Prostate gland (tissue), 2 donors: ENCODE measurements at regions of chr14 and their contacts with region 1.

Region 1: DNA sequence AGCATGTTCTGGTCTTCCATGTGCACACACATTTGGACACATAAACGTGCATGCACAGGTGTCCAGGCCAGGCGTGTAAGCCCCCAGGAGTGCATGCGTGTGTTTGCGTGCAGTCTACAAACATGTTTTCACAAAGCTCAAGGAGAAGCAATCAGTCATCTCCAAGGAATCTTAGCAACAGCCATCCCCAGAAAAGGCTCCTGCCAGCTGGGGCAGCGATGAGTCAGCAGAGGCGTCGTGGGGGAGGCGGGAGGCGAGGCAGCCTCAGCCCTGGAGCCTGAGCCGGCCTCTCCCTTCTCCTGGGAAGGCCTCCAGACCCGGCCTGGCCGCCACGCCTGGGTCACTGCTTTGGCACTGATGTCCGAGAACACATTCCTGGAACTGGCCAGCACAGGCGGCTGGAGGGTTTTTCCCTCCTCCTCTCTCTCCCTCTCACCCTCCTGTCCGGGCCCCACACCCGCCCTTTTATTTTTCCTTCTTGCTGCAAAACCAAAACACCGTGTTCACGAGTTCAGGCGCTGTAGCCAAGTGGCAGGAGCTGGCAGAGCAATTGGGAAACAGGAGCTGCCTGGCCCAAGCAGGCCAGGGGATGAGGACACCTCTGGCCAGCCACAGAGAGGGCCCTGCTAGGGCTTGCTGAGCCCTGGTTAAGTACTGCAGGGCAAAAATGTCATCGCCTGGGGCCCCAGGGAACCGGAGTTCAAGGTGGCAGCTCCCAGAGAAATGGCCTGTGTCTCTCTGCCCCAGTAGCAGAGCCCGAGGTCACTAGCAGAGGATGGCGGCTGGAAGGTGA is 92.7 kb downstream of the LRRC74A start:
- DNase-seq: peak; percentile 92
- H3K4me3 ChIP-seq: no peak overlapping the region
- H3K27ac ChIP-seq: peak overlapping the region; percentile 86 to 89
- H3K4me1 ChIP-seq: peaks cover 43% of the 10 kb centered on the region
- H3K27me3 ChIP-seq: no peaks in the 10 kb centered on the region
- CTCF ChIP-seq: peak in 1 of 4 experiments; percentile 27
- POLR2A ChIP-seq: no peak

Region 2: GRCh38 chr14:76953196-76954000 is 34.5 kb after region 1 on chr14:
- intact Hi-C with region 1: loop called (anchors 2 kb)
- DNase-seq: peak; percentile 81
- H3K4me3 ChIP-seq: no peak overlapping the region
- H3K27ac ChIP-seq: peak overlapping the region; percentile 90 to 96
- H3K4me1 ChIP-seq: peaks cover 33% of the 10 kb centered on the region
- H3K27me3 ChIP-seq: no peaks in the 10 kb centered on the region
- CTCF ChIP-seq: peak in 1 of 4 experiments; percentile 5
- POLR2A ChIP-seq: no peak

Region 3: DNA sequence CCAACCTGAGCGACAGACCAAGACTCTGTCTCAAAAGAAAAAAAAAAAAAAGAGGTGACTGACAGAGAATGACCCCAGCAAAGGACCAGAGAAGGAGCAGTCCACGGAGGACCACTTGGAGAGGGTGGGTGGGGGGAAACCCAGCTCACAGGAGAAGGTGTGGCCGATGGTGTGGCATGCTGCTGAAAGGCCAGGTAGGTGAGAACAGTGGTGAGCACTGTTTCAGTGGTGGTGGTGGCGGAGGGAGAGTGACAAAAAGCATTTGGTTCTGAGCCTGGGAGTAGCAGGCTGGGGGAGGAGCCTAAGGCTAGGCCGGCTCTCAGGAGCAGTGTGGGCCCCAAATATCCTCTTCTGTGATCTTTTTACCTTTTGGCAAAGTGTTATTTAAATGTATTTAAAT is 45.7 kb after region 1 on chr14:
- intact Hi-C with region 1: no loop called
- DNase-seq: no peak
- H3K4me3 ChIP-seq: no peak overlapping the region
- H3K27ac ChIP-seq: no peak overlapping the region
- H3K4me1 ChIP-seq: no peaks in the 10 kb centered on the region
- H3K27me3 ChIP-seq: no peaks in the 10 kb centered on the region
- CTCF ChIP-seq: no peak
- POLR2A ChIP-seq: no peak

Region 4: DNA sequence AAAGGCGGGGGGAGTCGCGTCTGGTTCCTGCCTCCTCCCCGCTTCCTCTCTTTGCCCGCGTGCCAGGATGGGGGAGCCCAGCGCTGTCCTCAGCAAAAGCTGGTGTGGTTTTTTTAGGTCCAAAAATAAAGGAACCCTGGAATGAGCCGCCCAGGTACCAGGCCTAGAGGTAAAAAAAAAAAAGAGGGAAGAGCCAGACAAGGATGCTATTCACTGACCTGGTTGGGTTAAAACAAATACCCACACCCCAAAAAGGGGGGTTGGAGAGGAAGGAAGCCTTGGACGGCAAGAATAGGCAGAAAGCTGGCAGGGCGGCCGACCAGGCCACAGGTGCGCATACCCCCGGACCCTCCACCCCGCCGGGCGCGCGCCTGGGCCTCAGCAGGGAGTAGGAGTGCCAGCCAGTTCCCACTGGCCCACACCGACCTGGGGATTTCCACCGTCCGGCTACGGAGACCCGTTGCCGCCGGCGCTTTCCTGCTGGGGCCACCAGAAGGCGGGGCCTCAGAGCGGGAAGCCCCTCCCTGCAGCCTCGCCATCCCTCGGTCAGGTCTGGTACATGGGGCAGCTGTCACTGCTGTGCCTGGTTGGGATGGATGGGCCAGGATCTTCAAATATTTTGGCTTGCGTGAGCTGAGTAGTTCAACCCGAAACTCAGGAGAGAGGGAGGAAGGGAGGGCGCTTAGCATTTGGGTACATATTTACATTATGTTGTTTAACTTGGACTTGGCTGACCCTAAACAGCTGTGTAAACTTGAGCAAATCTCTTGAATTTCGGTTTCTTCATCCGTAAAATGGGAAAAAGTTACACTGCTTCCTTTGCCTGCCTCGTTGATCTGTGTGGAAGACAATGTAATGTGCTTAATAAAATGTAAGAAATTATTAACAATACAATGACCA is 114.9 kb after region 1 on chr14:
- intact Hi-C with region 1: loop called (anchors 2 kb)
- DNase-seq: peak; percentile 82
- H3K4me3 ChIP-seq: peak overlapping the region; percentile 37 to 50
- H3K27ac ChIP-seq: peak overlapping the region; percentile 97 to 99
- H3K4me1 ChIP-seq: peaks cover 38% of the 10 kb centered on the region
- H3K27me3 ChIP-seq: no peaks in the 10 kb centered on the region
- CTCF ChIP-seq: peak in 2 of 4 experiments; percentile 1 to 4
- POLR2A ChIP-seq: peak; percentile 23